T-cell (primary cell): ENCODE measurements at regions of chr6 and their contacts with region 1.

Region 1: GRCh38 chr6:45522486-45522885 is 144.8 kb upstream of the SUPT3H start:
- DNase-seq: no peak
- ATAC-seq: no peak
- H3K4me3 ChIP-seq: no peak overlapping the region
- H3K4me3 Mint-ChIP-seq: no peak overlapping the region
- H3K27ac ChIP-seq: no peak overlapping the region
- H3K27ac Mint-ChIP-seq: no peak overlapping the region
- H3K4me1 ChIP-seq: peaks cover 0 to 2% of the 10 kb centered on the region in 2 experiments
- H3K4me1 Mint-ChIP-seq: peaks cover 8 to 13% (median 10%) of the 10 kb centered on the region in 3 donors
- H3K27me3 ChIP-seq: no peaks in the 10 kb centered on the region
- H3K27me3 Mint-ChIP-seq: no peaks in the 10 kb centered on the region

Region 2: DNA sequence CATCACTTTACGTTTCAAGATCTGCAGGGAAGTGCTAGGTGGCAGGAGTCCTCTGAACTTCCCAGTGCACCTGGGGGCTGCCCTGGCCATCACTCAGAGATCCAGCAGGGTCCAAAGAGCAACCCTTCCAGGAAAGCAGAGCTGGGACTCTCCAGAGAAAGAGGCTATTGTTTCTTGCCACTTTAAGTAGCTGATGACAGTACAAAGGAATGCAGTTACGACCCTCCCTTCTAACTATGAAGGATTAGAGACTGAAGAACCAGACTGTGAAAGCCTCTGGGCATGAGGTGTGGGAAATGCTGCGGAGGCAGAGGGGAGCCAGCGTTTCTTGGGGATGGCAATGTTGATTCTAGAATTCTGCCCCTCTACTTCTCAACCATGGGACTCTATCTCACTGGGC is 44.4 kb after region 1 on chr6:
- CTCF ChIA-PET with region 1: interaction called in 1 of 2 experiments, 11 read pairs
- POLR2A ChIA-PET with region 1: no interaction called
- DNase-seq: no peak
- ATAC-seq: no peak
- H3K4me3 ChIP-seq: no peak overlapping the region
- H3K4me3 Mint-ChIP-seq: no peak overlapping the region
- H3K27ac ChIP-seq: no peak overlapping the region
- H3K27ac Mint-ChIP-seq: no peak overlapping the region
- H3K4me1 ChIP-seq: peaks cover 0 to 6% of the 10 kb centered on the region in 2 experiments
- H3K4me1 Mint-ChIP-seq: peaks cover 2 to 10% (median 8%) of the 10 kb centered on the region in 3 donors
- H3K27me3 ChIP-seq: no peaks in the 10 kb centered on the region
- H3K27me3 Mint-ChIP-seq: no peaks in the 10 kb centered on the region

Region 3: DNA sequence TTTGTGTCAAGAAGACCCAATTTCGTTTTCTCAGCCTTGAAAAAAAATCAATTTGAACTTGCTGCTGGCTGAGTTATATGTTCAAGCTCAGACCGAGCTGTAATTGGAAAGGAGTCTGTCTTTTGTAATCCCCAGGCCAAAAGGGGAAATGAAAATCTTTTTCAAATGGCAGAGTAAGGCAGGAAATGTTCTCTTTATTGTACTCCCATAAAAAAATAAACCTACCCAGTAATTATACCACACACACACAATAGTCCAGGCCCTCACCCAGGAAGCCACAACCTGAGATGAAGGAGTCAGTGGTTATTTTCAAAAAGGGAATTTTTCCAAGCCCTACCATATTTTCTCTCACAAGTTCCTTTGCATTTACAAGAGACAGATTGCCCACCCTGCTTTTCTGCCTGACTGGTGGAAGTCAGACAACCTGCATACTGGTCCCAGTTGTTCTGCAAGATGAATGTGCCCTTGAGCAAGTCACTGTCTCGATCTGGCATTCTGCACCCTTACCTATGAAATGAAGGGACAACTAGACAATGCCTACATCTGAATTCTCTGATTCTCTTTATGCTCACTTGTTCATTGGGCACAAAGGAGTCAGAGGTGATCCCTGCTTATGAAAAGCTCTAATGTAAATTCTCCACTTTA is 448.0 kb after region 1 on chr6:
- CTCF ChIA-PET with region 1: no interaction called
- POLR2A ChIA-PET with region 1: no interaction called
- DNase-seq: no peak
- ATAC-seq: no peak
- H3K4me3 ChIP-seq: no peak overlapping the region
- H3K4me3 Mint-ChIP-seq: no peak overlapping the region
- H3K27ac ChIP-seq: no peak overlapping the region
- H3K27ac Mint-ChIP-seq: peak overlapping the region in 1 of 2 donors; percentile 11
- H3K4me1 ChIP-seq: peaks cover 0 to 6% of the 10 kb centered on the region in 2 experiments
- H3K4me1 Mint-ChIP-seq: peaks cover 11 to 23% (median 14%) of the 10 kb centered on the region in 3 donors
- H3K27me3 ChIP-seq: no peaks in the 10 kb centered on the region
- H3K27me3 Mint-ChIP-seq: no peaks in the 10 kb centered on the region